Cardiac septum (tissue), 1 donor: ENCODE measurements at regions of chr5 and their contacts with region 1.

Region 1: GRCh38 chr5:36392818-36393217 is 91.1 kb upstream of the RANBP3L start:
- DNase-seq: no peak

Region 2: GRCh38 chr5:36269479-36270219 is 123.2 kb before region 1 on chr5:
- intact Hi-C with region 1: loop called (anchors 5 kb)
- DNase-seq: no peak